ENCODE measurements at regions of chr22 and their contacts with region 1.

Region 1: GRCh38 chr22:30968924-30969539 is at the start of gene TUG1:
- H3K4me3 ChIP-seq: peak within 1 kb of the TSS; percentile 82
- H3K27ac ChIP-seq: peak within 1 kb of the TSS; percentile 95
- H3K4me1 ChIP-seq: peaks cover 5% of the 10 kb centered on the region; the same call in 1 of the 2 replicates
- CTCF ChIP-seq: no peak

Region 2: DNA sequence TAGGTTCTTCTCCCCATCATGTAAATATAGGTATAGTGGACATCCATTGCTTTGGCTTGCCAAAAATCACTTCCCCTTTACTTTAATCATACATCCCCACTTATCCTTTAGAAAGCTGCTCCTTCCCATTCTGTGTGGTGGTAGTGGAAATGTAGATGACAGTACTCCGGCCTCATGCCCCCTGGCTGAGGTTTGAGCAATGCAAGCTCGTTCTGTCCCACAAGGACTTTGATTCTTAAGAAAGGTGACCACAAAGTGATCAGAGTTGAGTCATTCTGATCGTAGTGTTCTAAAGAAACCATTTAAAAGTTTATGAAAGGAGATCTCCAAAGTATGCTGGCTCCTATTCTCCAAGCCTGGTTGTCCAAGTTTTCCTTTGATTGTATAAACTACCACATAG is 10.9 kb after region 1 on chr22:
- CTCF ChIA-PET with region 1: interaction called, 3 read pairs
- POLR2A ChIA-PET with region 1: interaction called, 11 read pairs
- H3K4me3 ChIP-seq: no peak overlapping the region
- H3K27ac ChIP-seq: no peak overlapping the region
- H3K4me1 ChIP-seq: no peaks in the 10 kb centered on the region
- CTCF ChIP-seq: no peak

Region 3: DNA sequence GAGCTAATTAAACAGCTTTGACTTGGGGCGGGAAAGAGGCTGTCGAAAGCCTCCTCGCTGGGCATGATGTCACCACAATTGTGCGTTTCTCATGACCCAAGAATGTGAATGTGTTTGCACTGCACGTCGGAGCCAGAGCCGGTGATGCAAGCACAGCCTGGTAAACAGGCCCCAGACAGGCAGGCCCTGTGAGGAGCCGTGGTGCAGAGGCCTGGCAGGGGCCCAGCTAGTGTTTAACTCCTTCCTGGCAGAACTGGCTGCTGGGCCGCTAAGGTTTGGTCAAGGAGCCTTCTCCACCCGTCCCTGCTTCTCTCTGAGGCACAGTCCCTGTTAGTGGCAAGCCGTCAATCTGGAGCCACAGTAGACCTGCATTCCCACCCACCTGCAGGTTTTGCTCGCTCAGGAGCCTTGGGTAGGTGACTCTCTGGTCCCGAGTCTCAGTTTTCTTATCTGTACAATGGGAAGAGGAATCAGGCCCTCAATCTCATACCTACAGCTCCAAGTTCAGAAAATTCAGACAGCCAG is 86.7 kb after region 1 on chr22:
- CTCF ChIA-PET with region 1: interaction called, 4 read pairs
- POLR2A ChIA-PET with region 1: interaction called, 16 read pairs
- H3K4me3 ChIP-seq: no peak overlapping the region
- H3K27ac ChIP-seq: peak overlapping the region; percentile 22; the same call in 1 of the 2 replicates
- H3K4me1 ChIP-seq: peaks cover 5% of the 10 kb centered on the region; the same call in 1 of the 2 replicates
- CTCF ChIP-seq: no peak